ENCODE measurements at regions of chr17 and their contacts with region 1.

Region 1: GRCh38 chr17:63425482-63425881 is 20.6 kb downstream of the CYB561 start:
- DNase-seq: peak; percentile 76 to 83
- H3K4me3 ChIP-seq: no peak overlapping the region
- H3K4me3 Mint-ChIP-seq: no peak overlapping the region
- H3K27ac Mint-ChIP-seq: no peak overlapping the region
- H3K4me1 ChIP-seq: no peaks in the 10 kb centered on the region
- H3K4me1 Mint-ChIP-seq: no peaks in the 10 kb centered on the region
- H3K27me3 ChIP-seq: no peaks in the 10 kb centered on the region
- H3K27me3 Mint-ChIP-seq: peaks cover 8% of the 10 kb centered on the region
- CTCF ChIP-seq: peak; percentile 89 to 96

Region 2: DNA sequence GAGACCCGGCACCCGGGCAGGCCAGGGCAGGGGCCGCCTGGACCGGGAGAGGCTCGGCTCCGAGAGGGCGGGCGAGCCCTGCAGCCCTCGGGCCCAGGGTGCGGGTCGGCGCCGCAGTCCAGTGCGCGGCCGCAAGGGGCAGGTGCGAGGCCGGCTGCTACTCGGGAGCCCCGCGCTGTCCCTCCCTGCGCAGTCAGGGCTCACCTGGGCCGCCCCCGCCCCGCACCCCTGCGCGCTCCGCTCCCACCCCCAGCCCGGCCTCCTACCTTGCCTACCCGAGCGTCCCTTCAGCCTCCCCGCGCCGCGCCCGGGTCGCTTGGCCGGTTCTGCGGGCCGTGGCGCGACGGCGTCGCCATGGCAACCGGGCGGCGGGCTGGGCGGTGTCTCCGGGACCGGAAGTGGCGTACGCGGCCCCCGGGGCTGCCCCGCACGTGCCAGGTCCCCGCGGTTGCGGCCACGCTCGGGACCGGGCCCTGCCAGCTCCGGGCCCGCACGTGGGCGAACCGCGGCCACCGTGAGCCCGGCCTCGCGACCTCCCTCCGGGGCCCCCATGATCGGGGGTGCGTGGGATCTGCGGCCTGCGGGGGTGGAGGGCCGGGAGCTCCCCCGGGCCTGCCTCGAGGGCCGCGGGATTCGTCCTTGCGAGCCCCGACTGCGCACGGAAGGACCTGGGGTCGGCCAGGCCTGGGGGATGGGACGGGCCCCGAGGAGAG is 20.7 kb after region 1 on chr17 and contains the start of gene CYB561:
- CTCF ChIA-PET with region 1: interaction called, 17 read pairs
- POLR2A ChIA-PET with region 1: no interaction called
- intact Hi-C with region 1: loop called (anchors 1 kb)
- DNase-seq: peak; percentile 91 to 97
- H3K4me3 ChIP-seq: peak within 1 kb of the TSS; percentile 85
- H3K4me3 Mint-ChIP-seq: peak within 1 kb of the TSS; percentile 72
- H3K27ac Mint-ChIP-seq: peak within 1 kb of the TSS; percentile 90
- H3K4me1 ChIP-seq: peaks cover 14% of the 10 kb centered on the region
- H3K4me1 Mint-ChIP-seq: peaks cover 7% of the 10 kb centered on the region
- H3K27me3 ChIP-seq: no peaks in the 10 kb centered on the region
- H3K27me3 Mint-ChIP-seq: no peaks in the 10 kb centered on the region
- CTCF ChIP-seq: peak; percentile 62 to 77
- total RNA-seq, gene CYB561: 46.3 and 48.3 TPM in 2 replicates

Region 3: GRCh38 chr17:63571763-63572271 is 146.3 kb after region 1 on chr17:
- CTCF ChIA-PET with region 1: interaction called, 5 read pairs
- POLR2A ChIA-PET with region 1: no interaction called
- intact Hi-C with region 1: loop called (anchors 1 kb)
- DNase-seq: no peak
- H3K4me3 ChIP-seq: no peak overlapping the region
- H3K4me3 Mint-ChIP-seq: no peak overlapping the region
- H3K27ac Mint-ChIP-seq: no peak overlapping the region
- H3K4me1 ChIP-seq: no peaks in the 10 kb centered on the region
- H3K4me1 Mint-ChIP-seq: no peaks in the 10 kb centered on the region
- H3K27me3 ChIP-seq: no peaks in the 10 kb centered on the region
- H3K27me3 Mint-ChIP-seq: no peaks in the 10 kb centered on the region
- CTCF ChIP-seq: no peak

Region 4: GRCh38 chr17:63621766-63622519 is 196.5 kb after region 1 on chr17 and contains the start of gene MAP3K3:
- CTCF ChIA-PET with region 1: interaction called, 25 read pairs
- POLR2A ChIA-PET with region 1: interaction called, 3 read pairs
- intact Hi-C with region 1: no loop called
- DNase-seq: peak; percentile 99 to 100
- H3K4me3 ChIP-seq: peak within 1 kb of the TSS; percentile 95
- H3K4me3 Mint-ChIP-seq: peak within 1 kb of the TSS; percentile 94
- H3K27ac Mint-ChIP-seq: peak within 1 kb of the TSS; percentile 78
- H3K4me1 ChIP-seq: no peaks in the 10 kb centered on the region; the same call in 1 of the 2 replicates
- H3K4me1 Mint-ChIP-seq: peaks cover 16% of the 10 kb centered on the region
- H3K27me3 ChIP-seq: no peaks in the 10 kb centered on the region
- H3K27me3 Mint-ChIP-seq: peaks cover 11% of the 10 kb centered on the region
- CTCF ChIP-seq: no peak
- total RNA-seq, gene MAP3K3: 15.3 and 16.2 TPM in 2 replicates

Region 5: DNA sequence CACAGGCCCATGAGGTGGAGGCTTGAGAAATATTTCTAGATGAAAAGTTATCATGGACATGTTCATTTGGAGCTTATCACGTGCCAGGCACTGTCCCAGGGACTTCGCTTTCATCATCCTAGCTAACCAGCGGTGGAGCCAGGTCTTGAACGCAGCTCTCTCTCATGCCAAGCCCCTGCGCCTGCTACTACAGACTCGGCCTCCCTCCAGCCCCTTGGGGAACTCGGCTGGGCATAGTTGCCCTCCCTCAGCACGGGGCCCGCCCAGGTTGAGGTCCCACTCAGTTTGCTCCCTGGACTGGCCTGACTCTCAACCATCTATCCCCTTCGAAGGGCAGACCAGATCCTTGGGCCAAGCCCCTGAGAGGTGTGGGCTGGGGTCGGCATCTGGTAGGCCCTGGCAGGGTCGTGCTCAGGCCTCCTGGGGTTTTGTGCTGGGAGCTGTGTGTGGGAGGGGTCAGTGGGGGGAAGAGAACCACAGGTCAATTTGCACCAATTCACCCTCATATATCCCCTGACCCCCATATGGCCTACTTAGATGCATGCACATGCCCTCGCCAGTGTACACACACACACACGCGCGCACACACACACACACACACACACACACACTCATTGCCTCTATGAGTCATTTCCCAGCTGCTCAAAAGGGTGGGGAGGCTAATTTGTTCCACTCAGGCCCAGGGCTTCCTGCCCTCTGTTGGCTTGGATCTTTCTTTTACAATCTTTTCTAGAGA is 559.3 kb after region 1 on chr17:
- CTCF ChIA-PET with region 1: no interaction called
- POLR2A ChIA-PET with region 1: no interaction called
- intact Hi-C with region 1: no loop called
- DNase-seq: no peak
- H3K4me3 ChIP-seq: no peak overlapping the region
- H3K4me3 Mint-ChIP-seq: no peak overlapping the region
- H3K27ac Mint-ChIP-seq: no peak overlapping the region
- H3K4me1 ChIP-seq: peaks cover 9% of the 10 kb centered on the region; the same call in 1 of the 2 replicates
- H3K4me1 Mint-ChIP-seq: no peaks in the 10 kb centered on the region
- H3K27me3 ChIP-seq: no peaks in the 10 kb centered on the region
- H3K27me3 Mint-ChIP-seq: no peaks in the 10 kb centered on the region
- CTCF ChIP-seq: no peak